ENCODE measurements at regions of chr15 and their contacts with region 1.

Region 1: DNA sequence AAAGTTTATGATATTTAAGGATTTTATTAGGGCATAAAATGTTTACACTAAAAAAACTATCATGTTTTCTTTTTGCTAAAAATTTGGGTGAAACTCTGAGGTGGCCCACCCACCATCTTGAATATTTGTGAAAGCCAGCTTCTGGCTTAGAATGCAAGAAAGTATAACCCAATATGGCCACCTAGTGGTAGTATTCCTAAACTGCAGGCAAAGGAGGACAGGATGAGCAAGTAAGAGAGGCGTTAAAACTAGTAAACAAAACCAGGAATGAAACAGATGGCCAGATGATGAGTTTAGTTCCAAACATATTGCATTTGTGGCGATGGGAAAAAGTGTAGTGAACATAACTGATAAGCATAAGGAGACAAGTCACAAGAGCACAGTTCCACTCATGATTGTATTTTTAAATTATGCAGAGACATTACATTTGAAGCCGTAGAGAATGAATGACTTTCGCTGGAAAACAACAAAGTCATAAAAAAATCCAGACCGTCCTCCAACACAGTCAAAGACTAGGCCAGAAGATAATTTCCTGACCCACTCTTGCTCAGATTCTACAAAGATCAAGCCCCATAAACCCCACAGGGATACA is 103.3 kb upstream of the PRTG start:
- DNase-seq: peak in 4 of 5 donors; percentile 40 to 91 (median 80)
- H3K4me3 ChIP-seq: no peak overlapping the region
- H3K27ac ChIP-seq: no peak overlapping the region
- H3K4me1 ChIP-seq: no peaks in the 10 kb centered on the region
- H3K27me3 ChIP-seq: no peaks in the 10 kb centered on the region
- CTCF ChIP-seq: peak; percentile 86

Region 2: GRCh38 chr15:55619783-55620182 is 226.4 kb before region 1 on chr15:
- intact Hi-C with region 1: no loop called
- DNase-seq: no peak
- H3K4me3 ChIP-seq: no peak overlapping the region
- H3K27ac ChIP-seq: no peak overlapping the region
- H3K4me1 ChIP-seq: no peaks in the 10 kb centered on the region
- H3K27me3 ChIP-seq: no peaks in the 10 kb centered on the region
- CTCF ChIP-seq: no peak

Region 3: DNA sequence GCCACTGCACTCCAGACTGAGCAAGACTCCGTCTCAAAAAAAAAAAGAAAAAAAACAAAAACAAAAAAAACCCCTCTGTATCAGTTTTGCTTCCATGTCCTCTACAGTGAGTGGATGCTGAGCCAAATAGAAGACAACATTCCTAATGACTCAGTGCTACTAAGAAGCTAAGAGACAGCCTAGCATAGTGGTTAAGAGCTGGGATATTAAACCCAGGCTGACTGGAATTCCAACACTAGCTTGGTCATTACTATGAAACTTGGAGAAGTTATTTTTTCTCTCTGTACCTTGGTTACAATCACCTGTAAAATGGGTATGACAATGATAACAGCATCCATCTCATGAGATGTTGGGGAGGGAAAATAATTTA is 197.2 kb before region 1 on chr15:
- intact Hi-C with region 1: loop called (anchors 10 kb)
- DNase-seq: no peak
- H3K4me3 ChIP-seq: no peak overlapping the region
- H3K27ac ChIP-seq: no peak overlapping the region
- H3K4me1 ChIP-seq: no peaks in the 10 kb centered on the region
- H3K27me3 ChIP-seq: no peaks in the 10 kb centered on the region
- CTCF ChIP-seq: no peak

Region 4: GRCh38 chr15:55669270-55669669 is 176.9 kb before region 1 on chr15:
- intact Hi-C with region 1: no loop called
- DNase-seq: peak in 3 of 5 donors; percentile 46 to 88 (median 86)
- H3K4me3 ChIP-seq: no peak overlapping the region
- H3K27ac ChIP-seq: no peak overlapping the region
- H3K4me1 ChIP-seq: no peaks in the 10 kb centered on the region
- H3K27me3 ChIP-seq: no peaks in the 10 kb centered on the region
- CTCF ChIP-seq: no peak

Measured in kidney (tissue), 22 donors.